GM12878 (cell line): ENCODE measurements at regions of chr3 and their contacts with region 1.

Region 1: DNA sequence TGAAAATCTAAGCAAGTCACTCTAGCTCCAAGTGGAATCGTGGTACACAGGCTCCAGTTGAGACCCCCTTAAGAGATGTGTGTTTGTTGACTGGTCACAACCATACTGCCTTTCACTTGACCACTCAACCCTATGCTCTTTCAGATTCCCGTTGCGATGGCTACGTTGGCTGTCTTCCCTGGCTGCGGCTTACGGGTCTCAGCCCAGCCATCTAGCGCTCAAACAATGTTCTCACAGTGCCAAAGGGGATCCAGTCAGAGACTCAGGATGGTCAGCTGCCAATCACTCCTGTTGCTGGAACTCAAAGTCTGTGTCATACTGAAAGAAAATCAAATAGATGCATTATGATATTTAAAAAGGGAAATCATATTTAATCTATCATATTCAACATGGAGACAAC is 237.6 kb downstream of the ITPR1 start:
- DNase-seq: no peak
- ATAC-seq: no peak
- H3K4me3 ChIP-seq: no peak overlapping the region
- H3K27ac ChIP-seq: no peak overlapping the region
- H3K4me1 ChIP-seq: no peaks in the 10 kb centered on the region
- H3K27me3 ChIP-seq: no peaks in the 10 kb centered on the region
- CTCF ChIP-seq: no peak
- EP300 ChIP-seq: no peak
- POLR2A ChIP-seq: no peak
- RAD21 ChIP-seq: no peak

Region 2: DNA sequence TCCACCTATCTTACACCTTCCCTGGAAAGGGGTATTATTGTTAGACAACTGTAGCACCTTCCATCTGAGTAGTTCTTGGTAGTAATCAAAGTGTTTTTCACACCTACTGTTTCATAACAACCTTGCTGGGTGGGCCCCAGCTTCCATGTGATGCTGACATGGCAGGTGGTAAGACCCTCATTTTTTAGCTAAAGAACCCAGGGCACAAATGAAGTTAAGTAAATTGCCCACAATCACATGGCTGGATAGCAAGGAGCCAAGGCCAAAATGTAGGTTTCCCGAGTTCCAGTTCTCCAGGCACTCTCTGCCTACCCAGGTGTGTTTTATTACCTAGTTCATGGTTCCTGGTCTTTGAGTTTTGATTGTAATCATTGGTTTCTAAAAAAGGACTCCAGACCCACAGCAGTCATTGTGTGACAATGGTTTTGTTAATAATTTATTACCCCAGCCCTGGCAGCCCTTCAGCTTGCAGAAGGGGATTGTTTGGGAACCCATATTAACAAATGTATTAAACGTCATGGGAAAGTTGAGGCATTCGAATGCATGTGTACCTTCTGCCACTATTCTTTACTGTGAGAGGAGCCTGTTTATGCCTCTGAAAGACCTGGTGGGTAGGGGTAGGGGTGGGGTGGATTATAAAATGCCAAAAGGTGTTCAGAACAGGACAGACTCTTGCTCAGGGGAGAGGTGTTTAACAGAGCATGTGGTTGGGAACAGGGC is 26.3 kb after region 1 on chr3:
- CTCF ChIA-PET with region 1: interaction called, 4 read pairs
- POLR2A ChIA-PET with region 1: interaction called, 23 read pairs
- RAD21 ChIA-PET with region 1: interaction called, 264 read pairs
- SMC1A ChIA-PET with region 1: interaction called, 429 read pairs
- in situ Hi-C with region 1: no loop called
- intact Hi-C with region 1: no loop called
- DNase-seq: no peak
- ATAC-seq: peak; percentile 12
- H3K4me3 ChIP-seq: no peak overlapping the region
- H3K27ac ChIP-seq: peak overlapping the region; percentile 33
- H3K4me1 ChIP-seq: peaks cover 55% of the 10 kb centered on the region
- H3K27me3 ChIP-seq: no peaks in the 10 kb centered on the region
- CTCF ChIP-seq: no peak
- EP300 ChIP-seq: peak in 1 of 2 experiments; percentile 37; a peak in 2 of 4 replicates
- POLR2A ChIP-seq: no peak
- RAD21 ChIP-seq: no peak